CD14-positive monocyte (primary cell): ENCODE measurements at regions of chr12 and their contacts with region 1.

Region 1: GRCh38 chr12:50174971-50175715 is 8.0 kb upstream of the CERS5 start:
- DNase-seq: peak; percentile 40 to 71 (median 59)
- H3K4me3 ChIP-seq: no peak overlapping the region
- H3K4me3 Mint-ChIP-seq: no peak overlapping the region
- H3K27ac ChIP-seq: no peak overlapping the region
- H3K27ac Mint-ChIP-seq: no peak overlapping the region
- H3K4me1 ChIP-seq: peaks cover 2 to 4% of the 10 kb centered on the region in 2 donors
- H3K4me1 Mint-ChIP-seq: peaks cover 5% of the 10 kb centered on the region
- H3K27me3 ChIP-seq: no peaks in the 10 kb centered on the region
- H3K27me3 Mint-ChIP-seq: peaks cover 0 to 3% (median 0%) of the 10 kb centered on the region in 3 donors
- CTCF ChIP-seq: peak; percentile 80

Region 2: DNA sequence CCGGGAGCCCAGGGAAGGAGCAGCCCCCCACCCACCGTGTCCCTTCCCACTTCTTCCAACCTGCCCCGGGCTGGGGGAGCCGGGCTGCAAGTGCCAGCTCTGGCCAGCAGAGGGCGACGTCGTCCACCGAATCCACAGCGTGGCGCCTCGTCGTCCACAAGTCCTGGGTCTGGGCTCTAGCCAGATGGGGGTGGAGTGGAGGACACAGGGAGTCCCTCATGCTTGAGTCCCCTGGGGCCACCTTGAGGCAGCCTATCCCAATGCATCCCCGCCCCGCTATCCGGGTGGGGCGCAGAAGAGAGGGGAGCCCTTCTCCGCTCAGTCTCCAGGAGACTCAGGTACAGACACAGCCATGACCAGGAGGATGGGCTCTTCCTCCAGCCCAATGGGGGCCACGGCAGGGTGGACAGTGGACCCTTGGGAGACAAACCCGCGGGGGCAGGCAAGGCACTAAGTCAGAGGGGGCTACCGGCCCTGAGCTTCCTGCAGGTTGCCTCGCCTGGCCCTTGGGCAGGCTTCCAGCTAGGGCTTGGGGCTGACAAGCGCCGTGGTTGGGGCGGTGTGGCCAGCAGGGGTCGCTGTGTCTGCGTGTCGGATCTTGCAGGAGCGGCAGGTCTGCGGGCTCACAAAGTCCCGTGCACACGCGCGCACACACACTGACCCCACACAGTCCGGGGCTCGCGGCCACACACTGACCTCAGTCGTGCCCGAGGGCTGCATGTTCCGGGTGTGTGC is 207.9 kb before region 1 on chr12:
- intact Hi-C with region 1: loop called (anchors 2 to 10 kb)
- DNase-seq: peak; percentile 83 to 88 (median 87)
- H3K4me3 ChIP-seq: peak overlapping the region; percentile 10 to 75 (median 42)
- H3K4me3 Mint-ChIP-seq: peak overlapping the region; percentile 73 to 85
- H3K27ac ChIP-seq: no peak overlapping the region
- H3K27ac Mint-ChIP-seq: peak overlapping the region in 3 of 7 donors; percentile 7 to 59 (median 49)
- H3K4me1 ChIP-seq: peaks cover 19 to 26% of the 10 kb centered on the region in 2 donors
- H3K4me1 Mint-ChIP-seq: peaks cover 12% of the 10 kb centered on the region
- H3K27me3 ChIP-seq: peaks cover 9 to 72% of the 10 kb centered on the region in 2 donors
- H3K27me3 Mint-ChIP-seq: peaks cover 48 to 56% (median 49%) of the 10 kb centered on the region in 3 donors
- CTCF ChIP-seq: peak; percentile 97

Region 3: DNA sequence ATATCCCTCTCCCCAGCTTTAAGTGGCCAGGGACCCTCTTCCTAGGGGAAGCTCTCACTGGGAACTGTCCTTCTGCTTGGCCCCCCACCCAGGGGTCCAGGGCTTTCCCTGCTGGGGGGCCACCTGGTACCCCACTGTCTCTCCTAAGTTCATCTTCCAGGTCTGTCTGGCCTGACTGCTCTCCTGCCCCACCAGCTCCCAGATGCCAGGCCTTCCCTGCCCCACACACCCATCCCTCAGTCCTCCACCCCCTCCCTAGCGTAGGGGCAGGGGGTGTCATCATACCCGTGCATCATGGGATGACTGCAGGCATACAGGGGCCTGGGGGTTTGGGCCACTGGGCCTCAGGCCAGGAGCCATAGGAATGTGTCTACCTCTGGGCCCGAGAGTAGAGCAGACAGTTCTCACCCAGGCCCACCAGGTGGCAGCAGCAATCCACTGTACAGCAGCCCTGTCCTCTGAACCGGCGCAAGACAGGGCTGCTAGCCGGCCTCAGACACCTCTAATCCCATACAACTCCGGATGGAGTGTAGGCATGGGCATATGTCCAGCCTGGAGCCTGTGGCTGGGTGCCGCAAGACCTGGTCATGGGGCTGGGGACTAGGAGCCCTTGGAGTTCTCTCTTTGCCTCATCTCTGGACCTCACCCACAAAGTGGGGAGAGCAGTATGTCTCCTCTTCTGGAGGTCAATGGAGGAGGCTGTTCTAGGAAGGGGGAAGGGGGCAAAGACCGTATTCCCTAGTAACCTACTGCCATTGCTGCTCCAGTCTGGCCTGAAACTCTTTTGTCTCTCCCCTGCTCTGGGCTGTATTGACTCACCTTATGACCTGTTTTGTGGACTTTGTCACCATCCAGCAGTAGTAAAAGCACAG is 100.0 kb before region 1 on chr12:
- intact Hi-C with region 1: loop called (anchors 2 kb)
- DNase-seq: peak; percentile 68 to 82 (median 78)
- H3K4me3 ChIP-seq: no peak overlapping the region
- H3K4me3 Mint-ChIP-seq: no peak overlapping the region
- H3K27ac ChIP-seq: no peak overlapping the region
- H3K27ac Mint-ChIP-seq: no peak overlapping the region
- H3K4me1 ChIP-seq: peaks cover 0 to 6% of the 10 kb centered on the region in 2 donors
- H3K4me1 Mint-ChIP-seq: peaks cover 9% of the 10 kb centered on the region
- H3K27me3 ChIP-seq: peaks cover 0 to 4% of the 10 kb centered on the region in 2 donors
- H3K27me3 Mint-ChIP-seq: peaks cover 8 to 19% (median 16%) of the 10 kb centered on the region in 3 donors
- CTCF ChIP-seq: peak; percentile 93

Region 4: GRCh38 chr12:50111693-50112455 is 63.3 kb before region 1 on chr12 and contains the start of gene COX14:
- intact Hi-C with region 1: loop called in 1 of 2 experiments (anchors 2 kb)
- DNase-seq: peak; percentile 99 to 100 (median 99)
- H3K4me3 ChIP-seq: peak within 1 kb of the TSS; percentile 67 to 87 (median 82)
- H3K4me3 Mint-ChIP-seq: peak within 1 kb of the TSS; percentile 98 to 99
- H3K27ac ChIP-seq: peak within 1 kb of the TSS; percentile 98
- H3K27ac Mint-ChIP-seq: peak within 1 kb of the TSS; percentile 98 to 100 (median 99)
- H3K4me1 ChIP-seq: peaks cover 16 to 23% of the 10 kb centered on the region in 2 donors
- H3K4me1 Mint-ChIP-seq: peaks cover 26% of the 10 kb centered on the region
- H3K27me3 ChIP-seq: no peaks in the 10 kb centered on the region
- H3K27me3 Mint-ChIP-seq: peaks cover 0 to 6% (median 2%) of the 10 kb centered on the region in 3 donors
- CTCF ChIP-seq: peak; percentile 17
- polyA plus RNA-seq, gene COX14: 63.8 to 257 (median 231) TPM

Region 5: GRCh38 chr12:50132505-50133135 is 42.5 kb before region 1 on chr12:
- intact Hi-C with region 1: loop called (anchors 2 to 5 kb)
- DNase-seq: peak in 1 of 3 donors; percentile 15
- H3K4me3 ChIP-seq: no peak overlapping the region
- H3K4me3 Mint-ChIP-seq: no peak overlapping the region
- H3K27ac ChIP-seq: no peak overlapping the region
- H3K27ac Mint-ChIP-seq: peak overlapping the region in 2 of 7 donors; percentile 0 to 10
- H3K4me1 ChIP-seq: peaks cover 11 to 16% of the 10 kb centered on the region in 2 donors
- H3K4me1 Mint-ChIP-seq: peaks cover 15% of the 10 kb centered on the region
- H3K27me3 ChIP-seq: no peaks in the 10 kb centered on the region
- H3K27me3 Mint-ChIP-seq: no peaks in the 10 kb centered on the region
- CTCF ChIP-seq: peak; percentile 79

Region 6: GRCh38 chr12:50211392-50212070 is 36.4 kb after region 1 on chr12:
- intact Hi-C with region 1: no loop called
- DNase-seq: no peak
- H3K4me3 ChIP-seq: no peak overlapping the region
- H3K4me3 Mint-ChIP-seq: no peak overlapping the region
- H3K27ac ChIP-seq: no peak overlapping the region
- H3K27ac Mint-ChIP-seq: peak overlapping the region in 1 of 7 donors; percentile 16
- H3K4me1 ChIP-seq: no peaks in the 10 kb centered on the region
- H3K4me1 Mint-ChIP-seq: peaks cover 8% of the 10 kb centered on the region
- H3K27me3 ChIP-seq: no peaks in the 10 kb centered on the region
- H3K27me3 Mint-ChIP-seq: peaks cover 0 to 2% (median 0%) of the 10 kb centered on the region in 3 donors
- CTCF ChIP-seq: no peak